ENCODE measurements at regions of chr12 and their contacts with region 1.

Region 1: GRCh38 chr12:93514853-93515252 is 47.5 kb downstream of the MRPL42 start:
- DNase-seq: no peak
- H3K4me3 ChIP-seq: no peak overlapping the region
- H3K27ac ChIP-seq: no peak overlapping the region
- H3K4me1 ChIP-seq: no peaks in the 10 kb centered on the region
- H3K27me3 ChIP-seq: no peaks in the 10 kb centered on the region

Region 2: DNA sequence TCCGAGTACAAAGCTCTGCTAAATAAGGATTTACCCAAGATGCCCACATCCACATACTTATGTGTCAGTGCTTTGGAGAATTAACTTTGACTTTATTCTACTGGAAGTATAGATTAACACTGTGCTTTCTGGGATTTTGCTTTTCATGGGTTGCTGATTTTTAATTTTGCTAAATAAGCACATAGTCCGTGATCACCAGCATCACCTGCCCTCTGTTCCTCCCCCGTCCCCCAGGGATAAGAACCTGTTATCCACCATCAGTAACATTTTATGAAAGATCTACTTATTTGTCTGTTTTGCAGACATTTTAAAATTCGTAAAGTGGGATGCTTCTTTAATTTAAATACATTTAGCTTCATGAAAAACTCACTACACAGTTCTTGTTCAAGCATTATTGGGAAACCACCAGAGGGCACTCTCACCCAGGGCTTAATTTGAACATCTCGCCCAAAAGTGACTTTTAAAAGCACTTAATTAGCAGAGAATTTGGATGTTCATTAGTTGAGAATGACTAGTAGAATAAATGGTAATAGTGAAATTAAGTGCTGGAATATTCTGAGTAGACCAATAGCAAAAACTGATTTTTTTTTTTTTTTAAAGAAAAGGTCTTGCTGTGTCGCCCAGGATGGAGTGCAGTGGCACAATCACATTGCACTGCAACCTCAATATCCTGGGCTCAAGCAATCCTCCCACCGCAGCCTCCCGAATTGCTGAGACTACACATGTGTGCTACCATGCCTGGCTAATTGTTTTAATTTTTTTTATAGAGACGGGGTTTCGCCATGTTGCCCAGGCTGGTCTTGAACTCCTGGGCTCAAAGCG is 11.8 kb before region 1 on chr12:
- CTCF ChIA-PET with region 1: interaction called, 55 read pairs
- POLR2A ChIA-PET with region 1: no interaction called
- DNase-seq: peak; percentile 69 to 85 (median 77)
- H3K4me3 ChIP-seq: no peak overlapping the region
- H3K27ac ChIP-seq: no peak overlapping the region
- H3K4me1 ChIP-seq: no peaks in the 10 kb centered on the region
- H3K27me3 ChIP-seq: no peaks in the 10 kb centered on the region

Region 3: GRCh38 chr12:93526786-93527428 is 12.1 kb after region 1 on chr12:
- CTCF ChIA-PET with region 1: interaction called, 16 read pairs
- POLR2A ChIA-PET with region 1: no interaction called
- DNase-seq: no peak
- H3K4me3 ChIP-seq: no peak overlapping the region
- H3K27ac ChIP-seq: no peak overlapping the region
- H3K4me1 ChIP-seq: peaks cover 5 to 26% (median 15%) of the 10 kb centered on the region in 4 experiments
- H3K27me3 ChIP-seq: no peaks in the 10 kb centered on the region

Region 4: GRCh38 chr12:93563807-93564538 is 49.1 kb after region 1 on chr12:
- CTCF ChIA-PET with region 1: interaction called, 16 read pairs
- POLR2A ChIA-PET with region 1: interaction called, 5 read pairs
- DNase-seq: peak; percentile 68 to 83 (median 81)
- H3K4me3 ChIP-seq: no peak overlapping the region
- H3K27ac ChIP-seq: peak overlapping the region in 1 of 2 experiments; percentile 1
- H3K4me1 ChIP-seq: peaks cover 0 to 16% (median 4%) of the 10 kb centered on the region in 4 experiments
- H3K27me3 ChIP-seq: no peaks in the 10 kb centered on the region

Region 5: GRCh38 chr12:93722835-93723538 is 208.1 kb after region 1 on chr12:
- CTCF ChIA-PET with region 1: no interaction called
- POLR2A ChIA-PET with region 1: no interaction called
- DNase-seq: no peak
- H3K4me3 ChIP-seq: no peak overlapping the region
- H3K27ac ChIP-seq: no peak overlapping the region
- H3K4me1 ChIP-seq: peaks cover 0 to 9% (median 4%) of the 10 kb centered on the region in 4 experiments
- H3K27me3 ChIP-seq: no peaks in the 10 kb centered on the region